Activated CD4-positive, alpha-beta T cell treated with anti-CD3 and anti-CD28 coated beads for 36 hours (primary cell): ENCODE measurements at regions of chr17 and their contacts with region 1.

Region 1: DNA sequence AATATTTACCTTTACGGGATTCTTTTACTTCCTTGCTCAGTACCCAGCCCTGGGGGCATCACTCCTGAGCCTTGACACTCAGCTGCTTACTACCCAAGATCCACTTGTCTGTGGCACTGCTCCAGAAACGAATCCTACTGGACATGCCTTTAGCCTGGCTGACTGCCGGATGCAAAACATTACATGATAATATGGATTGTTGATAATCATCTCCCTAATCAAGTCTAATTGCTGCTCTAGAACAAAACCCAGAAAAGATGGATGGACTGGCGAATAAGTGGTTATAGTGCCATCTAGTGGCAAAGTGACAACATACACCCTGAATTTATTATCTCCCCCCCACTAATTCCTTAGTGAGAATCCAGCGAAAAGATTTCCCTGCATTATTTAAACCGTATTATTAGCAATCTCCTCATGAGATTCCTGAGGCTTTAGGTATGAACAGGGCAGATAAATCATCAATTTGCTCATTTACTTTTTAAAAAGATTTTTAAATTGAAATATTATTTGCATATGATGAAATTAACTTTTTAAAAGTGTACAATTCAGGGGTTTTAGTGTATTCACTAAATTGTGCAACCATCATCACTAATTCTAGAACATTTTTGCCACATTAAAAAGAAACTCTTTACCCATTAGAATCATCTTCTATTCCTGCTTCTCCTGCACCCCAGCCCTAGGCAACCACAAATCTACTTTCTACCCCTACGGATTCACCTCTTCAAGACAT is 61.6 kb downstream of the RGS9 start:
- DNase-seq: no peak
- ATAC-seq: peak; percentile 70
- H3K4me3 Mint-ChIP-seq: no peak overlapping the region
- H3K27ac Mint-ChIP-seq: no peak overlapping the region
- H3K4me1 Mint-ChIP-seq: peaks cover 15% of the 10 kb centered on the region
- H3K27me3 Mint-ChIP-seq: no peaks in the 10 kb centered on the region

Region 2: GRCh38 chr17:64938925-64939474 is 259.8 kb before region 1 on chr17:
- CTCF ChIA-PET with region 1: interaction called, 3 read pairs
- POLR2A ChIA-PET with region 1: no interaction called
- intact Hi-C with region 1: loop called in 1 of 2 experiments (anchors 5 kb)
- DNase-seq: peak; percentile 76
- ATAC-seq: peak; percentile 86
- H3K4me3 Mint-ChIP-seq: no peak overlapping the region
- H3K27ac Mint-ChIP-seq: no peak overlapping the region
- H3K4me1 Mint-ChIP-seq: peaks cover 1% of the 10 kb centered on the region
- H3K27me3 Mint-ChIP-seq: no peaks in the 10 kb centered on the region

Region 3: GRCh38 chr17:65181237-65182061 is 17.4 kb before region 1 on chr17:
- CTCF ChIA-PET with region 1: interaction called, 15 read pairs
- POLR2A ChIA-PET with region 1: no interaction called
- intact Hi-C with region 1: no loop called
- DNase-seq: peak; percentile 71
- ATAC-seq: peak; percentile 77
- H3K4me3 Mint-ChIP-seq: no peak overlapping the region
- H3K27ac Mint-ChIP-seq: peak overlapping the region; percentile 75
- H3K4me1 Mint-ChIP-seq: peaks cover 54% of the 10 kb centered on the region
- H3K27me3 Mint-ChIP-seq: peaks cover 9% of the 10 kb centered on the region